WTC11 (cell line): ENCODE measurements at regions of chr2 and their contacts with region 1.

Region 1: GRCh38 chr2:19746611-19747309 is 155.0 kb downstream of the TTC32 start:
- DNase-seq: peak; percentile 79
- ATAC-seq: peak; percentile 85
- H3K4me3 Mint-ChIP-seq: no peak overlapping the region
- H3K27ac Mint-ChIP-seq: no peak overlapping the region
- H3K4me1 Mint-ChIP-seq: no peaks in the 10 kb centered on the region
- H3K27me3 Mint-ChIP-seq: no peaks in the 10 kb centered on the region
- CTCF ChIP-seq: peak; percentile 30

Region 2: DNA sequence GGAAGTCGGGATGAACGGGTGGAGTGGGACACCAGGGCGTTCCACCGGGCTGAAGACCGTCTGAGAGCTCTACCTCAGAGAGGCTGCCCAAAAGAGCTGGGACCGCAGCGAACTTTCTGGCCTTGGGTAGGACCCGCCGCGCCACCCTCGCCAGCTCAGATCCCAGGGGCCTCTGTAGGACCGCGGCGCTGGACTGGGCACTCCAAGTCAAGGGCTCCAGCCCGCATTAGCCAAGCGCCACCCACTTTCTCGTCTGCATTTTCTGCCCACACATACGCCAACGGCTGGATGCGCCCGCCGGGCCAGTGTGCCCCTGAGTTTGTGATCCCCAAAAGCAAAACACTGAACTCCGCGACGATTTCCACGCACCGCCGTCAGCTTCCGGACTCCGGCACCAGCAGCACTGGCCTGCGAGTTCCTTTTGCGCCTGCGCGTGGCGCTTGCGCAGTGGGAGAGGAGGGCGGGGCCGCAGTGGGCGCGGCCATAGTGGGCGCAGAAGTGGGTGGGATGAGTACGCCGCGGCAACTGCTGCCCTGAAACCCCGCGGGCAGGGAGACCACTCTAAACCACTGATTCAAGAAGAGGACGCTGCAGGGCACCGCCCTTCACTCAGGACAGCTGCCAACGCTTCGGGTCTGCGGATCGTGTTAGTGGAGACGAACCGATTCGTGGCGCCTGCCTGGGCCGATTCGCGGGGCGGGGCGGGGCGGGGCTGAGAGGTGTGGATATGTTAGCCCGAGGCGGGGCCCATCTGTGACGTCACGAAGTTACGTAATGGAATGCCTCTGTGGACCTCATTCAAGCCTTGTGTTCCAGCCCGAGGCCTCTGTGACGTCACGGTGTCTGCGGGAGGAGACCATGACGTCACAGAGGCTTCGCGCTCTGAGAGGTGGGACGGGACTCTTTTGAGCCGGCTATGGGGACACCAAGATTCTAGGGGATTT is 398.9 kb before region 1 on chr2:
- CTCF ChIA-PET with region 1: interaction called, 25 read pairs
- POLR2A ChIA-PET with region 1: no interaction called
- DNase-seq: peak; percentile 90
- ATAC-seq: peak; percentile 66
- H3K4me3 Mint-ChIP-seq: peak overlapping the region; percentile 94
- H3K27ac Mint-ChIP-seq: peak overlapping the region; percentile 89
- H3K4me1 Mint-ChIP-seq: peaks cover 21% of the 10 kb centered on the region
- H3K27me3 Mint-ChIP-seq: peaks cover 65% of the 10 kb centered on the region
- CTCF ChIP-seq: no peak

Region 3: GRCh38 chr2:19362755-19363473 is 383.8 kb before region 1 on chr2:
- CTCF ChIA-PET with region 1: interaction called, 14 read pairs
- POLR2A ChIA-PET with region 1: no interaction called
- DNase-seq: peak; percentile 71
- ATAC-seq: no peak
- H3K4me3 Mint-ChIP-seq: peak overlapping the region; percentile 70
- H3K27ac Mint-ChIP-seq: no peak overlapping the region
- H3K4me1 Mint-ChIP-seq: peaks cover 32% of the 10 kb centered on the region
- H3K27me3 Mint-ChIP-seq: peaks cover 92% of the 10 kb centered on the region
- CTCF ChIP-seq: peak; percentile 70

Region 4: DNA sequence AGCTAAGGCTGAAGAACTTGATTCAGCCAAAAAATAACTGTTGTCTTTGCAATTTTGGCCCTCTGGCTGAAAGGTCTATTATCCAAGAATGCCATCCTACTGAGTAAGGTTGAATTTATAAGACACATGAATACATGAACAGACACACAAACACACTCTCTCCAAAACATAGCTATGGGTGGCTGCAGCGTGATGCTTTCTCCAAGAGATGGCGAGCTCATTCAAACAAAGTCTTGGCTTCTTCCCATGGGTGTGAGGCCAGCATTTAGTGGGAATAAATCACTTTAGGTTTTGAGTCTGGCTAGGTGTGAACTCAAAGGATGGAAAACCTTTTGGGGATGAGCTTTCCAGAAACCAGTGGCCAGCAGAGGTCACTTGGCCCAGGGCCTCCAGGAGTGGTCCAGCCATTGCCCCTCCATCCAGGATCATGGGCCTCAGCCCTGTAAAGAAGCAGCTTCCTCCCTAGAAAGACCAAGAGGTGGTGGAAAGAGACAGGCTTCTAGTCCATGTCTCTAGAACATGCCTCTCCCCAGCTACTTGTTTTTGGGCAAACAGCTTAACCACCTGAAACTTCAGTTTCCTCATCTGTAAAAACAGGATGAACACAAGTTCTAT is 377.3 kb before region 1 on chr2:
- CTCF ChIA-PET with region 1: interaction called, 25 read pairs
- POLR2A ChIA-PET with region 1: no interaction called
- DNase-seq: no peak
- ATAC-seq: peak; percentile 74
- H3K4me3 Mint-ChIP-seq: no peak overlapping the region
- H3K27ac Mint-ChIP-seq: no peak overlapping the region
- H3K4me1 Mint-ChIP-seq: no peaks in the 10 kb centered on the region
- H3K27me3 Mint-ChIP-seq: peaks cover 40% of the 10 kb centered on the region
- CTCF ChIP-seq: no peak

Region 5: GRCh38 chr2:19702267-19702666 is 44.5 kb before region 1 on chr2:
- CTCF ChIA-PET with region 1: interaction called, 30 read pairs
- POLR2A ChIA-PET with region 1: no interaction called
- DNase-seq: no peak
- ATAC-seq: no peak
- H3K4me3 Mint-ChIP-seq: no peak overlapping the region
- H3K27ac Mint-ChIP-seq: no peak overlapping the region
- H3K4me1 Mint-ChIP-seq: no peaks in the 10 kb centered on the region
- H3K27me3 Mint-ChIP-seq: peaks cover 4% of the 10 kb centered on the region; the same call in 1 of the 2 replicates
- CTCF ChIP-seq: no peak

Region 6: GRCh38 chr2:19786408-19787058 is 39.8 kb after region 1 on chr2:
- CTCF ChIA-PET with region 1: no interaction called
- POLR2A ChIA-PET with region 1: no interaction called
- DNase-seq: no peak
- ATAC-seq: peak; percentile 11; the same call in 1 of the 2 replicates
- H3K4me3 Mint-ChIP-seq: no peak overlapping the region
- H3K27ac Mint-ChIP-seq: no peak overlapping the region
- H3K4me1 Mint-ChIP-seq: peaks cover 30% of the 10 kb centered on the region
- H3K27me3 Mint-ChIP-seq: peaks cover 7% of the 10 kb centered on the region
- CTCF ChIP-seq: no peak

Region 7: DNA sequence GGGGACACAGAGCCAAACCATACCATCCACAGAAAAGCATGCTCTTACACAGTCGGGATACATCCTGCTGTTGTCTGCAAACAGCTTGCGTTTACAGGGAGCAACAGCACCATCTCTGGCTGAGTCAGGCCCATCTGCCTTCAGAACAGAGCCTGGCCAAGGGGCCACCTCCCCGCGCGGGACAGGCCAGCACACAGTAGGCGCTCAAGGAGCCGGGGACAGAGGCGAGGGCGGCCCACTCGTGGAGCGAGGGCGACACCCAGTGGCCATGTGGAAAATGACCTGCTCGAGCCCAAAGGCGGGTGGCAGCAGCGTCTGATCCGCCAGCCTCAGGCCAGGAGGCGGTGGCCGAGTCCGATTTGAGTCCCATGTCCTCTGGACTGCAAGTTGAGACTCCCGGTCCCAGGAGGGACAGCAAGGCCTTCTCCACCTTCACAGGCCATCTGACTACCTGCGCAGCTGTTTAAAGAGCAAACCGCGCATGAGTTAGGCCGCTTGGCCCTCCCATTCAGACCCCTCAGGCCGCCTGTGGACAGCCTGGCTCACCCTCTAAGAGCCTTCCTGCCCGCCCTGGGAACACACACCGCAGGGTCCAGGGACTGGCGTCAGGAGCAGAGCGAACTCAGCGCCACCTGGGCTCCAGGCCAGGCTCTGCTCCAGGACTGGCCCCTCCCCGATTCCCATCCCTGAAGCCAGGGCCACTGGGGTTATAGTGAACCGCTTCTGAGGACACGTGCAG is 116.7 kb after region 1 on chr2:
- CTCF ChIA-PET with region 1: interaction called, 14 read pairs
- POLR2A ChIA-PET with region 1: no interaction called
- DNase-seq: peak; percentile 94
- ATAC-seq: peak; percentile 91
- H3K4me3 Mint-ChIP-seq: peak overlapping the region; percentile 54
- H3K27ac Mint-ChIP-seq: no peak overlapping the region
- H3K4me1 Mint-ChIP-seq: peaks cover 12% of the 10 kb centered on the region; the same call in 1 of the 2 replicates
- H3K27me3 Mint-ChIP-seq: peaks cover 19% of the 10 kb centered on the region
- CTCF ChIP-seq: peak; percentile 97